ENCODE measurements at regions of chr3 and their contacts with region 1.

Region 1: GRCh38 chr3:29677421-29677820 is 396.6 kb downstream of the RBMS3 start:
- DNase-seq: no peak
- H3K4me3 ChIP-seq: no peak overlapping the region
- H3K27ac ChIP-seq: no peak overlapping the region
- H3K4me1 ChIP-seq: peaks cover 3% of the 10 kb centered on the region
- H3K27me3 ChIP-seq: no peaks in the 10 kb centered on the region
- CTCF ChIP-seq: no peak

Region 2: GRCh38 chr3:29064085-29064484 is 613.3 kb before region 1 on chr3:
- intact Hi-C with region 1: loop called (anchors 5 kb)
- DNase-seq: no peak
- H3K4me3 ChIP-seq: no peak overlapping the region
- H3K27ac ChIP-seq: no peak overlapping the region
- H3K4me1 ChIP-seq: peaks cover 9% of the 10 kb centered on the region
- H3K27me3 ChIP-seq: no peaks in the 10 kb centered on the region
- CTCF ChIP-seq: no peak